ENCODE measurements at regions of chr1 and their contacts with region 1.

Region 1: DNA sequence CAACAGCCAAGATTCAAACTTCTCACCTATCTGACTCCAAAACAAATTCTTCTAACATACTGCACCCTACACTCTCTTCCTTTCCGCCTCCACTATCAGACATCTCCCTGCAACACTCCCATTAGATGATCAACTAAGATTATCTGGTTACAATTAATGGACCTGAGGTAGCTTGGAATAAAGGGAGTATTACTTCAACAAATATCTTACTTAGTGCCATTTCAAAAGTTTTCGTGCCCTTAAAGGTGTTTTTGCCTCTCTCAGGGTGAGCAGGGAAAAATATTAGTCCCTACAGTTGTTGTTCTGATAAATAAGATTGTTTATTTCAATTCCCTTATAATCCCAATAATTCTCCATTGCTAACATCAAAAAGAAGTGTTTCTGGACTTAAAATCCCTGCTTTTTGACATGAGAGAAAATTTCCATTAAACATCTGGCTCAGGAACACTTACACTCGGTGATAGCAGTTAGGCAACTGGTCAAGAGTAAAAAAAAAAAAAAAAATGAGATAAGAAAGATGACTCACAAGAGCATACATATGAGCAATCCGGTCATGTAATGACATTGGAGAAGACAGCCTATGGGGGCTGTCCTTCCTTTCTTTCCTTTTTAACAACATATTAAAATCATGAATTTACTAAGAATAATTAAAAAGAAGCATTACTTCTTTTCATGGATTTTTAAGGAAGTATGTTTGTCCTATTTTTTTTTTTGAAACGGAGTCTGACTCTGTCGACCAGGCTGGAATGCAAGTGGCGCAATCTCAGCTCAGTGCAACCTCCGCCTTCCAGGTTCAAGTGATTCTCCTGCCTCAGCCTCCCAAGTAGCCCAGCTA is 7.6 kb downstream of the RSBN1 start:
- DNase-seq: no peak
- H3K4me3 ChIP-seq: no peak overlapping the region
- H3K27ac ChIP-seq: no peak overlapping the region
- H3K4me1 ChIP-seq: peaks cover 38 to 82% (median 76%) of the 10 kb centered on the region in 4 donors
- H3K27me3 ChIP-seq: no peaks in the 10 kb centered on the region
- CTCF ChIP-seq: no peak
- EP300 ChIP-seq: no peak
- POLR2A ChIP-seq: no peak

Region 2: DNA sequence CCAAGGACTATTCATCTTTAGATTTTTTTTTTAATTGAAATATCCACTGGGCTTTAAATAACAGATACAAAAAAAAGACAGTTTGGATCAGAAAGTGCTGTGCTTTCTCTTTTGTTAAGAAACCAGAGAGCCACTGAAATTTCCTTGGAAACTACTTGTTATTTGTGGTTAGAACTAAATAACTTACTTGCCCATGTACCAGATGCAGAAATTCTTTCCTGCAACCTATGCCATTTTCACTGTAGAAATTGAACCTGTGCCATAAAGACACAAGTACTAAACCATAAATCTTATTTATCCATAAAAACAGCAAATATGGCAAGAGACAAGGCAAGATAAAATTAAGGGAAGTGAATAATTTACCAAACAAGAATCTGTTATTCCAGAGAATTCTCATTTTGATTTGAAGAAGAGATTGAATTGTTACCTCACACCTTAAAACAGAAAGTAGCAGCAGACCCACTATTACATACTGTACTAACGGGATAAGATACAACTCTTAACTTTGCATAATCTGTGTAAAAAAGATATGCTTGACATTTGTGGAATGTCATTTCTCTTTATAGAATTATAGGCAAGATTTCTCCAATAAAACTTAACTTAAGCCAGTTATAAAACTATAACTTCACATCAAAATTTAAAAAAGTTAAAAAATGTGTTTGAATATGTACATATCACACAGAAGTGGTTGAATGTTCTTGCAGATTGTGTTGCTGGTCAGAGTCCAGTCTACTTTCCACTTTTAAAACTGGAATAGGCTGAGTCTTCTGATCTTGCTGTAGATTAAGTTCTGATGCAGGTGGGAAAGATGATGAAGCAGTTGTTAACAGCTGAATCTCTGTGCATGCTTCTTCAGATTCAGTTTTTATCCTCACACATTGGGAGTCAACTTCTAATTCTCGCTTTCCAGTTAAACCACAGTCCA is 39.1 kb before region 1 on chr1:
- intact Hi-C with region 1: loop called (anchors 5 kb)
- DNase-seq: no peak
- H3K4me3 ChIP-seq: no peak overlapping the region
- H3K27ac ChIP-seq: no peak overlapping the region
- H3K4me1 ChIP-seq: peaks cover 0 to 13% (median 7%) of the 10 kb centered on the region in 4 donors
- H3K27me3 ChIP-seq: no peaks in the 10 kb centered on the region
- CTCF ChIP-seq: no peak
- EP300 ChIP-seq: no peak
- POLR2A ChIP-seq: no peak